ENCODE measurements at regions of chr9 and their contacts with region 1.

Region 1: GRCh38 chr9:19174127-19174912 is 47.0 kb upstream of the PLIN2 start:
- DNase-seq: peak; percentile 40
- ATAC-seq: peak; percentile 100
- H3K4me3 Mint-ChIP-seq: no peak overlapping the region
- H3K27ac Mint-ChIP-seq: no peak overlapping the region
- H3K4me1 Mint-ChIP-seq: peaks cover 6% of the 10 kb centered on the region
- H3K27me3 Mint-ChIP-seq: peaks cover 3% of the 10 kb centered on the region
- CTCF ChIP-seq: no peak

Region 2: GRCh38 chr9:17531642-17532254 is 1642.6 kb before region 1 on chr9:
- CTCF ChIA-PET with region 1: no interaction called
- POLR2A ChIA-PET with region 1: no interaction called
- intact Hi-C with region 1: loop called (anchors 10 kb)
- DNase-seq: no peak
- ATAC-seq: no peak
- H3K4me3 Mint-ChIP-seq: no peak overlapping the region
- H3K27ac Mint-ChIP-seq: no peak overlapping the region
- H3K4me1 Mint-ChIP-seq: no peaks in the 10 kb centered on the region
- H3K27me3 Mint-ChIP-seq: no peaks in the 10 kb centered on the region
- CTCF ChIP-seq: no peak

Region 3: DNA sequence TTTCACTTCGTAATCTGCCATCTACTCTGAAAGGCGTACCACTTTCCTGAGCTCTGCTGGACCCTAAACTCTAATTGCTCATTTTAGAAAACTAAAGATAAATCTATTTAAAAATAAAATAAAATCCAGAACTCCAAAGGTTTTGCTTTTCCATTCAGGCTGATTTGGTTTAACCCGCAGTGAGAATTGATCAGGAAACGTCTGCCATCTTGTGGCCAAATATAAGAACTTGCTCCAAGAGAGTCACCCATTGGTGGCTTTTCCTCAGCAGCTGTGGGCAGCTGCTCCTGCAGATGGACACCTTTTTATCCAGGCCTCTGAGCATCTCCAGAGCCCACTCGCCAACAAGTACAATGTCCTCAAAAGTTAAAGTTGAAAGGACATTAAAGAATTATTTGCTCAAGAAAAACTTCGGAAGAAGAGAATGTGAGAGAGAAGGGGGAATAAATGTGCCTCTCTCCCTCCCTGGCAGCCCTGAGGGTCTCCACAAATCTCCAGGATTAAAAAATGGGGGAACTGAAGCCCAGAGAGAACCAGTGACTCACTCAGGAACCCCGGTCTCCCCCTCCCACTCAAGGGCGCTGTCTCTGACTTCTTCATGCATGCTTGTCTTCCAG is 145.4 kb before region 1 on chr9:
- CTCF ChIA-PET with region 1: no interaction called
- POLR2A ChIA-PET with region 1: no interaction called
- intact Hi-C with region 1: loop called (anchors 1 kb)
- DNase-seq: no peak
- ATAC-seq: peak; percentile 49
- H3K4me3 Mint-ChIP-seq: no peak overlapping the region
- H3K27ac Mint-ChIP-seq: no peak overlapping the region
- H3K4me1 Mint-ChIP-seq: peaks cover 2% of the 10 kb centered on the region
- H3K27me3 Mint-ChIP-seq: peaks cover 5% of the 10 kb centered on the region
- CTCF ChIP-seq: no peak

Region 4: GRCh38 chr9:19048966-19049916 is 125.1 kb before region 1 on chr9 and contains the start of gene RRAGA:
- CTCF ChIA-PET with region 1: interaction called, 26 read pairs
- POLR2A ChIA-PET with region 1: interaction called, 12 read pairs
- intact Hi-C with region 1: loop called (anchors 1 kb)
- DNase-seq: peak; percentile 98
- ATAC-seq: peak; percentile 90
- H3K4me3 Mint-ChIP-seq: peak within 1 kb of the TSS; percentile 91
- H3K27ac Mint-ChIP-seq: peak within 1 kb of the TSS; percentile 97
- H3K4me1 Mint-ChIP-seq: peaks cover 46% of the 10 kb centered on the region
- H3K27me3 Mint-ChIP-seq: no peaks in the 10 kb centered on the region
- CTCF ChIP-seq: no peak
- total RNA-seq, gene RRAGA: 44.6 and 45.0 TPM in 2 replicates

Region 5: GRCh38 chr9:19102631-19103345 is 71.5 kb before region 1 on chr9 and contains the start of gene HAUS6:
- CTCF ChIA-PET with region 1: interaction called, 6 read pairs
- POLR2A ChIA-PET with region 1: interaction called, 3 read pairs
- intact Hi-C with region 1: loop called (anchors 1 kb)
- DNase-seq: peak; percentile 86
- ATAC-seq: peak; percentile 94
- H3K4me3 Mint-ChIP-seq: peak within 1 kb of the TSS; percentile 98
- H3K27ac Mint-ChIP-seq: peak within 1 kb of the TSS; percentile 93
- H3K4me1 Mint-ChIP-seq: peaks cover 17% of the 10 kb centered on the region
- H3K27me3 Mint-ChIP-seq: no peaks in the 10 kb centered on the region
- CTCF ChIP-seq: no peak
- total RNA-seq, gene HAUS6: 13.7 and 15.3 TPM in 2 replicates

Region 6: GRCh38 chr9:19184144-19184917 is 10.0 kb after region 1 on chr9:
- CTCF ChIA-PET with region 1: interaction called, 8 read pairs
- POLR2A ChIA-PET with region 1: no interaction called
- intact Hi-C with region 1: loop called (anchors 1 kb)
- DNase-seq: peak; percentile 26
- ATAC-seq: peak; percentile 98
- H3K4me3 Mint-ChIP-seq: peak overlapping the region; percentile 46
- H3K27ac Mint-ChIP-seq: peak overlapping the region; percentile 94
- H3K4me1 Mint-ChIP-seq: peaks cover 10% of the 10 kb centered on the region
- H3K27me3 Mint-ChIP-seq: no peaks in the 10 kb centered on the region
- CTCF ChIP-seq: no peak

Region 7: GRCh38 chr9:19788614-19789271 is 614.4 kb after region 1 on chr9 and contains the start of gene SLC24A2:
- CTCF ChIA-PET with region 1: no interaction called
- POLR2A ChIA-PET with region 1: no interaction called
- intact Hi-C with region 1: no loop called
- DNase-seq: no peak
- ATAC-seq: no peak
- H3K4me3 Mint-ChIP-seq: no peak within 1 kb of the TSS
- H3K27ac Mint-ChIP-seq: no peak within 1 kb of the TSS
- H3K4me1 Mint-ChIP-seq: no peaks in the 10 kb centered on the region
- H3K27me3 Mint-ChIP-seq: peaks cover 30% of the 10 kb centered on the region
- CTCF ChIP-seq: no peak
- total RNA-seq, gene SLC24A2: not detected in 2 replicates